Activated CD4-positive, alpha-beta T cell treated with anti-CD3 and anti-CD28 coated beads for 36 hours (primary cell): ENCODE measurements at regions of chr19 and their contacts with region 1.

Region 1: GRCh38 chr19:42423462-42424344 is 3.5 kb downstream of the LIPE start:
- DNase-seq: peak; percentile 96
- ATAC-seq: peak; percentile 91
- H3K4me3 Mint-ChIP-seq: peak overlapping the region; percentile 86
- H3K27ac Mint-ChIP-seq: peak overlapping the region; percentile 92
- H3K4me1 Mint-ChIP-seq: peaks cover 40% of the 10 kb centered on the region
- H3K27me3 Mint-ChIP-seq: no peaks in the 10 kb centered on the region

Region 2: DNA sequence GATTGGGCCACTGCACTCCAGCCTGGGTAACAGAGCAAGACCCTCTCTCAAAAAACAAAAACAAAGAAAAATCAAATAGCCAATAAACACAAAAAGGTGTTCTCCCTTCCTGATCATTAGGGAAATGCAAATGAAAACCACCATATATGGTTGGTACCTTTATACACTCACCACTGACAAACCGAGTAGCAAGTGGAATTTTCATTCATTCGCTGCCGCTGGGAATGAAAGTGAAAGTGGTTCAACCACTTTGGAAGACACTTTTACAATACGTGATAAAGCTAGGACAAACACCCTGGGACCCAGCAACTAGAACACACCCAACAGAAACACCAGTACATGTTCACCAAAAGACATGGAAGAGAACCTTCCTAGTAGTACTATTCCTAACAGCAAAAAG is 374.7 kb before region 1 on chr19:
- CTCF ChIA-PET with region 1: no interaction called
- POLR2A ChIA-PET with region 1: no interaction called
- intact Hi-C with region 1: no loop called
- DNase-seq: peak; percentile 34
- ATAC-seq: peak; percentile 9
- H3K4me3 Mint-ChIP-seq: no peak overlapping the region
- H3K27ac Mint-ChIP-seq: peak overlapping the region; percentile 35
- H3K4me1 Mint-ChIP-seq: peaks cover 21% of the 10 kb centered on the region
- H3K27me3 Mint-ChIP-seq: peaks cover 2% of the 10 kb centered on the region

Region 3: DNA sequence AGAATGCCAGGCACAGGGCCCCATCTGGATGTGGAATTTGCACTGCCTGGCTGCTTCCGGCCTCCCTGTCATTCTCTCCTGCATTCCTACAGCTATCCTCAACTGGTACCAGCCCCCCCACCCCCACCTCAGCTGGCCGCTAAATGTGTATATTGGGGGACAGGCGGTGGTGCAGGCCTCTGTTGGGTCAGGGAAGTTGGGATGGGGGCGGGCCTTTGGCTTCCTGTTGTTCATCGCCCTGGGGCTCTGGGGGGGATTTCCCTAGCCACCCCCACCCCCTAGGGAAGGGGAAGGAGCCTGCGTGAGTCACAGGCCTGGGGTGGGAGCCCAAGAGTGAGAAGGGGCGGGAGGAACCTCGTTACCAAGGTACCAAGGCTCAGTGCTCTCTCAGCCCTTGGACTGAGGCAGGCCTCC is 302.0 kb before region 1 on chr19:
- CTCF ChIA-PET with region 1: no interaction called
- POLR2A ChIA-PET with region 1: no interaction called
- intact Hi-C with region 1: loop called in 1 of 2 experiments (anchors 2 kb)
- DNase-seq: peak; percentile 93
- ATAC-seq: peak; percentile 81
- H3K4me3 Mint-ChIP-seq: peak overlapping the region; percentile 80
- H3K27ac Mint-ChIP-seq: peak overlapping the region; percentile 94
- H3K4me1 Mint-ChIP-seq: peaks cover 57% of the 10 kb centered on the region
- H3K27me3 Mint-ChIP-seq: no peaks in the 10 kb centered on the region

Region 4: GRCh38 chr19:42199440-42200115 is 224.1 kb before region 1 on chr19:
- CTCF ChIA-PET with region 1: no interaction called
- POLR2A ChIA-PET with region 1: no interaction called
- intact Hi-C with region 1: no loop called
- DNase-seq: peak; percentile 83
- ATAC-seq: peak; percentile 69
- H3K4me3 Mint-ChIP-seq: peak overlapping the region; percentile 57
- H3K27ac Mint-ChIP-seq: peak overlapping the region; percentile 91
- H3K4me1 Mint-ChIP-seq: peaks cover 81% of the 10 kb centered on the region
- H3K27me3 Mint-ChIP-seq: no peaks in the 10 kb centered on the region

Region 5: DNA sequence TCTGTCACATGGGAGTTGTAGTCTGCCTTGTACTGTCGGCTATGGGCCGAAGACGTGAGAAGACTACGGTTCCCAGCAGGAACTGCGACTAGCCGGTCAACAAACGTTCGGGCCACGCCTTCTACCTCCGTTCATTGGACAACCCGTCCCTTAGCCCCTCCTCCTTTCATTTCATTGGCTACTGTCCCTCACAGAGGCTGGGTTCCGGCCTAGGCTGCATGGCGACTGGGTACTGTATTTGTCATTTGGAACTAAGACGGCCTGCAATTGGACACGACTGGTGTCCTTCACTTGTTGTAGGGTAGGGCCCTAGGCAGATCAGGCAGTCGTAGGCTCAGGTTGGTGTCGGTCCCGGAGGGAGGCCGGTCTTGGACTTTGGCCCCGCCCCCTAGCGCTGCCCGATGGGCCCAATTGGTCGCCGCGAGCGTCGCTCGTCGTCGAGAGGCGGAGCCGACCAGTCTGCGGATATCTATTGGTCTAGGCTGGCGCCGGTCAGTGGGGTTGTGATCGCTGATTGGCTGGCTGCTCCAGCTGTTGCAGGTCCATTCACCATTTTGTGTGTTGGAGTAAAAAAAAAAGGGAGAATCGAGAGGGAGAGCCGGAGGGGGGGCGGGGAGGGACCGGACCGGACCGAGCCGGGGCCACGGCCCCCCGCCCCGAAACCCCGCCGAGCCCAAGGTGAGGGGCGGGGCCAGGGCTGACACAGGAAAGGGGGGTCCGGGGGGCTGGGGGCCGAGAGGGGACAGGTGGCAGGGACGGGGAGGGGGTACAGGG is 154.8 kb before region 1 on chr19 and contains the start of gene CIC:
- CTCF ChIA-PET with region 1: no interaction called
- POLR2A ChIA-PET with region 1: no interaction called
- intact Hi-C with region 1: loop called in 1 of 2 experiments (anchors 1 kb)
- DNase-seq: peak; percentile 100
- ATAC-seq: peak; percentile 87
- H3K4me3 Mint-ChIP-seq: no peak within 1 kb of the TSS
- H3K27ac Mint-ChIP-seq: peak within 1 kb of the TSS; percentile 97
- H3K4me1 Mint-ChIP-seq: peaks cover 24% of the 10 kb centered on the region
- H3K27me3 Mint-ChIP-seq: no peaks in the 10 kb centered on the region
- total RNA-seq, gene CIC: 62.8 to 66.3 TPM

Region 6: GRCh38 chr19:42301656-42302203 is 122.0 kb before region 1 on chr19 and contains the start of gene PRR19:
- CTCF ChIA-PET with region 1: no interaction called
- POLR2A ChIA-PET with region 1: no interaction called
- intact Hi-C with region 1: loop called in 1 of 2 experiments (anchors 1 kb)
- DNase-seq: peak; percentile 50
- ATAC-seq: peak; percentile 25
- H3K4me3 Mint-ChIP-seq: peak within 1 kb of the TSS; percentile 83
- H3K27ac Mint-ChIP-seq: peak within 1 kb of the TSS; percentile 85
- H3K4me1 Mint-ChIP-seq: peaks cover 19% of the 10 kb centered on the region
- H3K27me3 Mint-ChIP-seq: no peaks in the 10 kb centered on the region
- total RNA-seq, gene PRR19: 0.63 to 1.0 TPM

Region 7: GRCh38 chr19:42352301-42353259 is 71.1 kb before region 1 on chr19:
- CTCF ChIA-PET with region 1: no interaction called
- POLR2A ChIA-PET with region 1: no interaction called
- intact Hi-C with region 1: no loop called
- DNase-seq: peak; percentile 19
- ATAC-seq: peak; percentile 12
- H3K4me3 Mint-ChIP-seq: no peak overlapping the region
- H3K27ac Mint-ChIP-seq: no peak overlapping the region
- H3K4me1 Mint-ChIP-seq: no peaks in the 10 kb centered on the region
- H3K27me3 Mint-ChIP-seq: no peaks in the 10 kb centered on the region

Region 8: DNA sequence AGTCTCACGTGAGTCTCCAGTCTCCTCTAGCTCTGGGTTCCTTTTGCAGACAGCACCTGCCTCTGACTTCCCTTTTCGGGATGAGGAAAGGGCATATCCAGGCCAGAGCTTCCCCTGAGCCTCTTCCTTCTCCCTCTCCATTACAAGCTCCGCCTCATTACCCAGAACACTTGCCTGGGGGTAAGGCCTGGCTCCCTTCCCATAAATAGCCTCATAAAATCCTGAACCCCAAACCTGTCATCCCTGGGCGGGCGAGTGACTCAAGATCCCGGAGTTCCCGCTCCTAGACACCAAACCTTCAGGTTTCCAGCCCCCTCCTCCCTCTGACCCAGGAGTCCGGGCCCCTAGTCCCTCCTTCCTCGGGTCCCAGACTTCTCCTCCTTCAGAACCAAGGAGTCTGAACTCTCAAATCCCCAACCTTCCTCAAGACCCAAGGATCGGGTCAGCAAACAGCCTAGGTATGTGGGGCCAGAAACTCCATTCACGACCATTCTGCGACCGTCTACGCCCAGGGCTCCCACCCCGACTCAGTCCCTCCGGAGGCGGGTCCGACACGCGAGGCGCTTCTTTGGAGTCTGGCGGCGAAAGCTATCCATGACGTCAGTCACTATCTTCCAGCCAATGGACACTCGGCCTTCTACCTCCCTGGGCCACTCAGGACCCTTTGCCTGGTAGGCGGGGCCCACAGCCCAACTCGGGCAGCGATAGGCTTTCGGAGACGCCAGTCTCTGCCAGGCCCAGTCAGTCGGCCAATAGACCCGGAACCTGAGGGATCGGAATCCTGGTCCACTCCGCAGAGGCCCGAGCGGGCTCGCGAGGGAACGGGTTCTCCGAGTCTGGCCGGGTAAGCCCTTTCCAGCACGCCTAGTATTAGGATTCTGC is 27.1 kb before region 1 on chr19:
- CTCF ChIA-PET with region 1: interaction called, 9 read pairs
- POLR2A ChIA-PET with region 1: interaction called, 5 read pairs
- intact Hi-C with region 1: loop called in 1 of 2 experiments (anchors 1 kb)
- DNase-seq: peak; percentile 97
- ATAC-seq: peak; percentile 99
- H3K4me3 Mint-ChIP-seq: peak overlapping the region; percentile 88
- H3K27ac Mint-ChIP-seq: peak overlapping the region; percentile 90
- H3K4me1 Mint-ChIP-seq: peaks cover 18% of the 10 kb centered on the region
- H3K27me3 Mint-ChIP-seq: peaks cover 2% of the 10 kb centered on the region

Region 9: GRCh38 chr19:42440357-42441048 is 16.8 kb after region 1 on chr19:
- CTCF ChIA-PET with region 1: interaction called, 32 read pairs
- POLR2A ChIA-PET with region 1: interaction called, 3 read pairs
- intact Hi-C with region 1: loop called in 1 of 2 experiments (anchors 1 kb)
- DNase-seq: peak; percentile 91
- ATAC-seq: peak; percentile 71
- H3K4me3 Mint-ChIP-seq: no peak overlapping the region
- H3K27ac Mint-ChIP-seq: no peak overlapping the region
- H3K4me1 Mint-ChIP-seq: peaks cover 27% of the 10 kb centered on the region
- H3K27me3 Mint-ChIP-seq: no peaks in the 10 kb centered on the region

Region 10: GRCh38 chr19:42594617-42595489 is 171.2 kb after region 1 on chr19 and contains the start of gene CEACAM8:
- CTCF ChIA-PET with region 1: no interaction called
- POLR2A ChIA-PET with region 1: no interaction called
- intact Hi-C with region 1: no loop called
- DNase-seq: no peak
- ATAC-seq: no peak
- H3K4me3 Mint-ChIP-seq: no peak within 1 kb of the TSS
- H3K27ac Mint-ChIP-seq: no peak within 1 kb of the TSS
- H3K4me1 Mint-ChIP-seq: no peaks in the 10 kb centered on the region
- H3K27me3 Mint-ChIP-seq: peaks cover 11% of the 10 kb centered on the region
- total RNA-seq, gene CEACAM8: not detected

Region 11: DNA sequence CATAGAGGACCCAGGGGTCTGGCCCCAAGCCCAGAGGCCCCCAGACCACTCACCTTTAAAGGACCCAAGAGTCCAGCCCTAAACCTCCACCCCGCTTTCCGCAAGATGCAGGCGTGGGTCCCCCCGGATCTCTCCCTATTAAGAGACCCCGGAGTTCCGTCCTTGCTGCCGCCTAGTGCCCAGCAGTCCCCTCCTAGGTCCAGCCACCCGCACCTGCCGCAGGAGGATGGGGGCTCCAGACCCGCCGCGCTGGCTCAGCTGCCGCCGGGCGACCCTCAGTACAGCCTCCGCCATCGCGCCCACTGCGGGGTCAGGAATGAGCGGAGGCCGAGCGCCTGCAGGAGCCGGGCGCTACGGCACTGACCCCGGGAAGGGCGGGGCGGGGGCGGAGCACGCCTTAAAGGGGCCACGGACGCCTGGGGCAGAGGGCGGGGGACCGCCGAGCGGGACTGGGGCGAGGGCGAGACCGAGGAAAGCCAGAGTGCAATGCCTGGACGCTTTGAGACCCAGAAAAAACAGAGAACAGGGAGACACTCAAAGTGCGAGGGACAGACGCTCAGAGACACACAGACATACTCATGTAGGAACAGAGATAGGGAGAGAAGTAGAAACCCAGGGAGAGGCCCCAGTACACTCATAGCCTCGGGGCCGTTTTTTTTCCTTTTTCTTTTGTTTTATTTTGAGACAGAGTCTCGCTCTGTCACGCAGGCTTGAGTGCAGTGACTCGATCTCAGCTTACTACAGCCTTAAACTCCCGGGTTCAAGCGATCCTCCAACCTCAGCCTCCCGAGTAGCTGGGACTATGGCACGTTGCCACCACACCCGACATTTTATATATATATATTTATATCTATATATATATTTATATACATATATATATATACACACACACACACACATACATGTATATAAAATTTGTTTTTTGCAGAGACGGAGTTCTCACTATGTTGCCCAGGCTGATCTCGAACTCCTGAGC is 1103.5 kb after region 1 on chr19 and contains the start of gene ETHE1:
- CTCF ChIA-PET with region 1: no interaction called
- POLR2A ChIA-PET with region 1: no interaction called
- intact Hi-C with region 1: loop called in 1 of 2 experiments (anchors 10 kb)
- DNase-seq: peak; percentile 87
- ATAC-seq: peak; percentile 70
- H3K4me3 Mint-ChIP-seq: peak within 1 kb of the TSS; percentile 92
- H3K27ac Mint-ChIP-seq: peak within 1 kb of the TSS; percentile 94
- H3K4me1 Mint-ChIP-seq: peaks cover 22% of the 10 kb centered on the region
- H3K27me3 Mint-ChIP-seq: no peaks in the 10 kb centered on the region
- total RNA-seq, gene ETHE1: 68.7 to 78.8 TPM